GM12878 (cell line): ENCODE measurements at regions of chr3 and their contacts with region 1.

Region 1: GRCh38 chr3:179882292-179882691 is 154.4 kb downstream of the PEX5L start:
- DNase-seq: peak; percentile 61
- ATAC-seq: peak; percentile 94
- H3K4me3 ChIP-seq: no peak overlapping the region
- H3K27ac ChIP-seq: peak overlapping the region; percentile 58; the same call in 1 of the 2 replicates
- H3K4me1 ChIP-seq: peaks cover 21% of the 10 kb centered on the region
- H3K27me3 ChIP-seq: no peaks in the 10 kb centered on the region
- CTCF ChIP-seq: no peak
- EP300 ChIP-seq: no peak
- POLR2A ChIP-seq: no peak
- RAD21 ChIP-seq: no peak

Region 2: GRCh38 chr3:179526989-179527391 is 355.3 kb before region 1 on chr3:
- CTCF ChIA-PET with region 1: no interaction called
- POLR2A ChIA-PET with region 1: no interaction called
- RAD21 ChIA-PET with region 1: no interaction called
- SMC1A ChIA-PET with region 1: no interaction called
- in situ Hi-C with region 1: no loop called
- intact Hi-C with region 1: no loop called
- DNase-seq: no peak
- ATAC-seq: no peak
- H3K4me3 ChIP-seq: no peak overlapping the region
- H3K27ac ChIP-seq: no peak overlapping the region
- H3K4me1 ChIP-seq: no peaks in the 10 kb centered on the region
- H3K27me3 ChIP-seq: peaks cover 0 to 3% of the 10 kb centered on the region in 2 experiments; a peak in 3 of 4 replicates
- CTCF ChIP-seq: no peak
- EP300 ChIP-seq: no peak
- POLR2A ChIP-seq: no peak
- RAD21 ChIP-seq: no peak

Region 3: DNA sequence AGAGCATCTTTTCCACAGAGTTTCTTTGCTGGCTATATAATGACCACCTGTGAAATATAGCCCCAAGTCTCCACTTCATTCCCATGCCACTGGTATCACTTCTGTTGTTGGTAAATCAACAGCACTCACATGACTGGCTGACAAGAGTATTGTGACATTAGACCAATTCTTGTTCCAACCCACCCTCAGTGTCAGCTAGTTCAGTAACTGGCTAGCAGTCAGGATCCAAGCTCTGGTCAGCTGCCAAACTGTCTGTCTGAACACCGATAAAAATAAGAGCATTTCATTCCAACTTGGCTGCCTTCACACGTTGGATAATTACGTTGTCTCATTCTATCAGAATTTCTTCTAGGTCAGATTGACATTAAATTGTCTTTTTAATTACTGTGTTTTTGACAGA is 62.9 kb before region 1 on chr3:
- CTCF ChIA-PET with region 1: no interaction called
- POLR2A ChIA-PET with region 1: no interaction called
- RAD21 ChIA-PET with region 1: no interaction called
- SMC1A ChIA-PET with region 1: no interaction called
- in situ Hi-C with region 1: no loop called
- intact Hi-C with region 1: no loop called
- DNase-seq: no peak
- ATAC-seq: no peak
- H3K4me3 ChIP-seq: no peak overlapping the region
- H3K27ac ChIP-seq: no peak overlapping the region
- H3K4me1 ChIP-seq: no peaks in the 10 kb centered on the region
- H3K27me3 ChIP-seq: no peaks in the 10 kb centered on the region
- CTCF ChIP-seq: no peak
- EP300 ChIP-seq: no peak
- POLR2A ChIP-seq: no peak
- RAD21 ChIP-seq: no peak

Region 4: GRCh38 chr3:179852142-179852905 is 30.0 kb before region 1 on chr3:
- CTCF ChIA-PET with region 1: interaction called, 7 read pairs
- POLR2A ChIA-PET with region 1: interaction called, 6 read pairs
- RAD21 ChIA-PET with region 1: interaction called, 31 read pairs
- SMC1A ChIA-PET with region 1: interaction called, 23 read pairs
- in situ Hi-C with region 1: no loop called
- intact Hi-C with region 1: no loop called
- DNase-seq: no peak
- ATAC-seq: peak; percentile 98
- H3K4me3 ChIP-seq: no peak overlapping the region
- H3K27ac ChIP-seq: no peak overlapping the region
- H3K4me1 ChIP-seq: peaks cover 4% of the 10 kb centered on the region; the same call in 1 of the 2 replicates
- H3K27me3 ChIP-seq: no peaks in the 10 kb centered on the region
- CTCF ChIP-seq: peak in 2 of 3 experiments; percentile 12 to 19; a peak in 1 of 6 replicates
- EP300 ChIP-seq: no peak
- POLR2A ChIP-seq: no peak
- RAD21 ChIP-seq: peak; percentile 36; the same call in 1 of the 2 replicates

Region 5: GRCh38 chr3:179956416-179956830 is 74.1 kb after region 1 on chr3:
- CTCF ChIA-PET with region 1: interaction called, 10 read pairs
- POLR2A ChIA-PET with region 1: interaction called, 6 read pairs
- RAD21 ChIA-PET with region 1: interaction called, 27 read pairs
- SMC1A ChIA-PET with region 1: interaction called, 15 read pairs
- in situ Hi-C with region 1: no loop called
- intact Hi-C with region 1: loop called (anchors 2 kb)
- DNase-seq: peak; percentile 96
- ATAC-seq: peak; percentile 91
- H3K4me3 ChIP-seq: peak overlapping the region; percentile 4; the same call in 1 of the 2 replicates
- H3K27ac ChIP-seq: peak overlapping the region; percentile 70
- H3K4me1 ChIP-seq: peaks cover 27% of the 10 kb centered on the region
- H3K27me3 ChIP-seq: no peaks in the 10 kb centered on the region
- CTCF ChIP-seq: no peak
- EP300 ChIP-seq: peak; percentile 89 to 98
- POLR2A ChIP-seq: no peak
- RAD21 ChIP-seq: no peak

Region 6: DNA sequence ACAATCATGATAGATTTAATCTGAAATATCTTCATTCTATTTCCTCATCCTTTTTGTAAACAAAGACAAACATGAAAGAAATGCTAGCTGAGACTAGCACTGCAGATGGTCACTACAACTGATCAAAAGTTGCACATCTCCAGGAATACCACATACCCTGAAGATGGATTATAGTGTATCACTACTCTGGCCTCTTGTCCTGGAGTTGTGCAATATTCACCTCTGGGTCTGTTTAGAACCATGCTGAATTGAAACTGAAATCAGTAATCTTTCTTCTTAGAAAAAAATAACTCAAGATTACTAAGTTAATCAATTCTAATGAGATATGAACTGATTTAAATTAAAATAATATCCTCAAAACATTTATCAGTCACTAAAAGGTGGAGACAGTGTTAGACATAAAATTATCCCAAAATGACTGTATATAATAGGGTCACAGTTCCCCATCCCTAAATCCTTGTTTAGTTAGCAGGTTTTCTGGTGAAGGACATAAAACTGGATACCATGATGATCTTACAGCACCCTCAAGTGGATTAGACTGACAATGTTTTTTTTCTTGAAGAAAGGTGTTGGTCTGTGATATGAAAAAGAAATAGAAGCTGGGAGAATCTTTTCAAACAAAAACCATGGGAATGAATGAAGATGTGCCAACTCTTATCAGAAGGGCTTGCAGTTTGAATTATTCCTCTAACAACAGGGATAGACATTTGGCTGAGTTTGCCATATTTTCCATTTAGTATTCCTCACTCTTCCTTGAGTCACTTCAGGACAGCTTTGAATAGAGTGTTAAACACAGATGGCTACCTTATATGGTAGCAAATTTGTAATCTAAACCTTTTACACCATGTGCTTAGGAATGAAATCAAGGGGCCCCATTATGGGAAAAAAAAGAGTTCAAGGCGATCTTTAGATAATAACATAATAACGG is 712.6 kb after region 1 on chr3:
- CTCF ChIA-PET with region 1: interaction called, 23 read pairs
- POLR2A ChIA-PET with region 1: no interaction called
- RAD21 ChIA-PET with region 1: interaction called, 14 read pairs
- SMC1A ChIA-PET with region 1: interaction called, 12 read pairs
- in situ Hi-C with region 1: no loop called
- intact Hi-C with region 1: no loop called
- DNase-seq: peak; percentile 26
- ATAC-seq: peak; percentile 88
- H3K4me3 ChIP-seq: no peak overlapping the region
- H3K27ac ChIP-seq: no peak overlapping the region
- H3K4me1 ChIP-seq: no peaks in the 10 kb centered on the region
- H3K27me3 ChIP-seq: no peaks in the 10 kb centered on the region
- CTCF ChIP-seq: peak; percentile 38 to 72 (median 52); a peak in 5 of 6 replicates
- EP300 ChIP-seq: no peak
- POLR2A ChIP-seq: no peak
- RAD21 ChIP-seq: peak; percentile 91